ENCODE measurements at regions of chr3 and their contacts with region 1.

Region 1: GRCh38 chr3:184777336-184778004 is 34.5 kb upstream of the VPS8 start:
- DNase-seq: peak; percentile 57 to 86
- H3K4me3 ChIP-seq: no peak overlapping the region
- H3K27ac ChIP-seq: no peak overlapping the region
- H3K4me1 ChIP-seq: peaks cover 0 to 7% (median 3%) of the 10 kb centered on the region in 4 experiments; a peak in 3 of 7 replicates
- H3K27me3 ChIP-seq: no peaks in the 10 kb centered on the region; a peak in 1 of 7 replicates
- CTCF ChIP-seq: peak; percentile 18 to 87 (median 77)
- EP300 ChIP-seq: no peak
- POLR2A ChIP-seq: no peak
- RAD21 ChIP-seq: peak; percentile 96 to 97

Region 2: GRCh38 chr3:184561061-184561912 is 216.2 kb before region 1 on chr3 and contains the start of gene EPHB3:
- CTCF ChIA-PET with region 1: interaction called, 27 read pairs
- POLR2A ChIA-PET with region 1: interaction called, 6 read pairs
- DNase-seq: peak; percentile 99 to 100
- H3K4me3 ChIP-seq: peak within 1 kb of the TSS; percentile 13 to 63 (median 38); a peak in 7 of 8 replicates
- H3K27ac ChIP-seq: no peak within 1 kb of the TSS
- H3K4me1 ChIP-seq: peaks cover 17 to 41% (median 38%) of the 10 kb centered on the region in 4 experiments
- H3K27me3 ChIP-seq: peaks cover 52 to 83% (median 79%) of the 10 kb centered on the region in 4 experiments
- CTCF ChIP-seq: peak in 2 of 3 experiments; percentile 96 to 100; a peak in 3 of 4 replicates
- EP300 ChIP-seq: no peak
- POLR2A ChIP-seq: 0 out of 3 replicates have a peak, but pooled peaks of 1 of the 2 experiments have one; percentile 46
- RAD21 ChIP-seq: peak; percentile 98
- total RNA-seq, gene EPHB3: 0.80 and 0.91 TPM in 2 replicates

Region 3: GRCh38 chr3:184597829-184598573 is 179.5 kb before region 1 on chr3:
- CTCF ChIA-PET with region 1: interaction called, 22 read pairs
- POLR2A ChIA-PET with region 1: no interaction called
- DNase-seq: no peak
- H3K4me3 ChIP-seq: no peak overlapping the region
- H3K27ac ChIP-seq: no peak overlapping the region
- H3K4me1 ChIP-seq: peaks cover 4 to 36% (median 15%) of the 10 kb centered on the region in 4 experiments
- H3K27me3 ChIP-seq: peaks cover 20 to 55% (median 48%) of the 10 kb centered on the region in 4 experiments
- CTCF ChIP-seq: no peak
- EP300 ChIP-seq: no peak
- POLR2A ChIP-seq: no peak
- RAD21 ChIP-seq: no peak

Region 4: DNA sequence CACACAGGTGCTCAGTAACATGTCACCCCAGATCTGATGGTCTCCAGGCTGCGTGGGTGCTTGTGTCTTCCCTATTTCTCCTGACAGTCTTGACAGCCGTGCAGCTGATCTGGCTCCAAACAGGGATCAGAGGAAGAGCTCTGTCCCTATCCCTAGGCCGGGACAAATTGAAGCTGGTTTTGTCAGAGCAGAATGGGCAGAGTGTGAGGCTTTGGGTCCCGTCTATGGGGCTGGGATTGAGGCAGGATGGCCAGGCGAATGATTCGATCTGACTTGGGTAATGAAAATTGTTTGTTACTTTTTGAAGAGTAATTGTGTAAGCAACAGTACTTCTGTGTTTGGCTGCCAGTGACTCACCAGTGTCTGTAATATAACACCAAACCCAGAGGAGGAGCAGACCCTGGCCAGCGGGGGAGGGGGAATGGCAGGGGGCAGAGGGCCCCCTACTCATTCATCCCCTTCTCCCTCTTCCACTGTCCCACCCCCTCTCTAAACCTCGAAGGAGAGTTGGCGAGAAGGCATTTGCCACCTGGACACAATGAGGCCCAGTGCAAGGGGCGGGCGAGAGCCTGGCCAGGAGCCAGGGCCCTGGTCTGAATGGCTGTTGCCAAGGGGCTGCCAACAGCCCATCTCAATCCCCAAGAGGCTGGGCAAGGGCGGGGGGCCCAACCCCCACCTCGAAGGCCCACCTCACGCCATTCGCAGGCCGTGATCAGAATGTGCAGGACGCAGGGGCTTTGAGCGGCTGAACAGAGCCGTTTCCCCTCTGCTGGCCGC is 60.7 kb before region 1 on chr3:
- CTCF ChIA-PET with region 1: interaction called, 24 read pairs
- POLR2A ChIA-PET with region 1: interaction called, 5 read pairs
- DNase-seq: peak in 1 of 2 experiments; percentile 60
- H3K4me3 ChIP-seq: peak overlapping the region in 2 of 4 experiments; percentile 10 to 21; a peak in 2 of 8 replicates
- H3K27ac ChIP-seq: no peak overlapping the region
- H3K4me1 ChIP-seq: peaks cover 9 to 17% (median 13%) of the 10 kb centered on the region in 4 experiments
- H3K27me3 ChIP-seq: no peaks in the 10 kb centered on the region
- CTCF ChIP-seq: peak in 1 of 3 experiments; percentile 8; a peak in 1 of 4 replicates
- EP300 ChIP-seq: no peak
- POLR2A ChIP-seq: no peak
- RAD21 ChIP-seq: peak in 1 of 2 experiments; percentile 21; a peak in 1 of 4 replicates

Region 5: DNA sequence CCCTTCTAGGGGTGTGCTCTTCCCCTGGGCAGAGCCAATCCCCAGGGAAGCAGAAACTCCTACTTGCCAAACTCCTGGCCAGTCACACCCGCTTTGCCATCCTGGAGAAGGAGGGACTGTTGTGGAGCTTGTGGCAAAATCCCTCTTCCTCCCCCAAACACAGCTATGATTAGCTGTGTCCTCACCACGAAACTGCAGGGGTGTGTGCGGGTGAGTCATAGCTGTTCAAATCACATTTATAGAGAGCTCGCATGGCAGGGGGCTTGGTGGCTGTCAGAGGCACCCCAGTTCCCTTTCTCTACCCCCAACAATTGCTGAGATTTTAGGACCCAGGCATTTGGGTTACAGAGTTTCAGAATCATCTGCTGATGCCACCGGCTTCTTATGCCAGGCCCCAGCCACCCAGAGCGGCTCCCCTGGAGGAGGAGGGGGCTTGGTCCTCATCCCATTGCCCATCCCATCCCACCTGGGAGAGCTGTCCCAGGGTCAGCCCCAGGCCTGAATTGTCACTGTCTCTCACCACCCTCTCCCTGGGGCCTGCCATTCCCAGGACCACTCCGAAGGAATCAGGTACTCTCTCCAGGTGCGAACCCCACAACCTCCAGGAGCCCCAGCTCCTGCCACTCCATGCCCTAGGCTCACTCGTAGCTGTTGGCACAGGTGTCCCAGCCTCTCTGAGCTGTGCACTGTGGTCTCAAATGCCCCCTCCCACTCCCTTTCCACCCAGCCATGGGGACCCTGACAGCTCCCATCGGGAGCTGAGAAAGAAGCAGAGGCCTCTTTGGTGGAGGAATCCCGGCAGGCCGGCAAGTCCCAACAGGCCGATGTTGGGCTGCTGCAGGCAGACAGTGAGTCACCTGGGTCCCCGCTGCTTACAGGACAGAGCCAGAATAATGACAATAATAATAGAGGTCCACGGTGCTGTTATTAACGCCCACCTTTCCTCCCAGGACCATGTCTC is 36.7 kb before region 1 on chr3:
- CTCF ChIA-PET with region 1: interaction called, 22 read pairs
- POLR2A ChIA-PET with region 1: no interaction called
- DNase-seq: no peak
- H3K4me3 ChIP-seq: no peak overlapping the region
- H3K27ac ChIP-seq: no peak overlapping the region
- H3K4me1 ChIP-seq: peaks cover 0 to 3% (median 1%) of the 10 kb centered on the region in 4 experiments; a peak in 1 of 7 replicates
- H3K27me3 ChIP-seq: no peaks in the 10 kb centered on the region
- CTCF ChIP-seq: no peak
- EP300 ChIP-seq: no peak
- POLR2A ChIP-seq: no peak
- RAD21 ChIP-seq: no peak

Region 6: DNA sequence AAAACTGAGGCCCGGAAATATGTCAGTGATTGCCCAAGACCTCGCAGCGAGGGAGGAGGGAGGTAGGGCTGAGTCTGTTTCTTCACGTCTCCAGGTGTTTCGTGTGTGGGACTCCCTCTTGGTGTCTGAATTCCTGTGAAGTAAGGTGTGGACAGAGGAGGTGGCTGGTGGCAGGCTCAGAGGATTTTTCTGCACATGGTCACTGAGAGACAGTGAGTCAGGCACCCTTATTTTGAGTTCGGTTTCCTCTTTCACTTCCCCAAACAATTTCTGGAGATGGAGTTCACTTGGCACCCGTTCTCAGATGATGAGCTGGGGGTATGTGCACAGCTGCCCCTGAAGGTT is 11.8 kb before region 1 on chr3:
- CTCF ChIA-PET with region 1: interaction called, 51 read pairs
- POLR2A ChIA-PET with region 1: interaction called, 3 read pairs
- DNase-seq: no peak
- H3K4me3 ChIP-seq: no peak overlapping the region
- H3K27ac ChIP-seq: no peak overlapping the region
- H3K4me1 ChIP-seq: peaks cover 4 to 10% (median 6%) of the 10 kb centered on the region in 4 experiments; a peak in 5 of 7 replicates
- H3K27me3 ChIP-seq: peaks cover 0 to 2% (median 0%) of the 10 kb centered on the region in 4 experiments; a peak in 3 of 7 replicates
- CTCF ChIP-seq: no peak
- EP300 ChIP-seq: no peak
- POLR2A ChIP-seq: no peak
- RAD21 ChIP-seq: no peak